ENCODE measurements at regions of chr1 and their contacts with region 1.

Region 1: DNA sequence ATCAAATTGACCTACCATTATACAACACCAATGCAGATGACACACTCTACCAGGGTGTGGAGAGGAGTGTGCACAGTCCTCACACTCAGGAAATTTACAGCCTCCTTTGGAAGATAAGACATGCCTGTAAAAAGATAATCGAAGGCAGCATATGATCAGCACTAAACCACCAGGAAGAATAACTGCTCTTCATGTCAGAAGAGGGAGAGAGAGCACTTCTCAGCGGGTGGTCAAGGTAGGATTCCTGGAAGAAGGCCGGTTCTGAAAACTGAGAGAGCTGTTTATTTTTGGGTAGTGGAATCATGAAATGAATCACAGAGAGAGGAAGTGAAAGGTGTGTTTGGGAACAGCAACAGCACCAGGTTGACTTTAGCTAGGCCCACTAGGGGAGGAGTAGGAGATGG is 14.0 kb upstream of the ZNF697 start:
- DNase-seq: peak; percentile 40
- CTCF ChIP-seq: no peak

Region 2: GRCh38 chr1:119647734-119648619 is 14.1 kb before region 1 on chr1 and contains the start of gene ZNF697:
- CTCF ChIA-PET with region 1: interaction called, 58 read pairs
- POLR2A ChIA-PET with region 1: interaction called, 6 read pairs
- DNase-seq: peak; percentile 82
- CTCF ChIP-seq: no peak

Region 3: GRCh38 chr1:119732465-119733168 is 70.6 kb after region 1 on chr1:
- CTCF ChIA-PET with region 1: no interaction called
- POLR2A ChIA-PET with region 1: no interaction called
- DNase-seq: no peak
- CTCF ChIP-seq: no peak

Region 4: DNA sequence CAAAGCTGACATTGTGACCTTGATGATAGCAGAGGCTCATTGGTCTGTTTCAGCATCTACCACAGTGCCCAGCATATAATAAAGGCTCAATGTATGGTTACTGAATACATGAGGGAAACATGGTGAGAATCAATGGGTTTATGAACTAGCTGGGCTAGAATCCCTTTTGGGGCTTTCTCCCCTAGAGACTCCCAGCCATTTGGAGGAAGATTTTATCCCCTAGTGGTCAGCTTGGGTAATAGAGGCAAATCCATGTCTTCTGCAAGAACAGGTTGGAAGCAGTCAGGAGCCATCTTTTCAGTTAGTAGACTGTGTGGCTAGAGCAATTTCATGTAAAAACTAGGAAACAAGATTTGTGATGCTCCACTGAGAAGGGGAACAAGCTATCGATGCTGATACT is 165.0 kb after region 1 on chr1:
- CTCF ChIA-PET with region 1: no interaction called
- POLR2A ChIA-PET with region 1: no interaction called
- DNase-seq: no peak
- CTCF ChIP-seq: no peak

Measured in GM10248 (cell line).